BJ (cell line): ENCODE measurements at regions of chr10 and their contacts with region 1.

Region 1: DNA sequence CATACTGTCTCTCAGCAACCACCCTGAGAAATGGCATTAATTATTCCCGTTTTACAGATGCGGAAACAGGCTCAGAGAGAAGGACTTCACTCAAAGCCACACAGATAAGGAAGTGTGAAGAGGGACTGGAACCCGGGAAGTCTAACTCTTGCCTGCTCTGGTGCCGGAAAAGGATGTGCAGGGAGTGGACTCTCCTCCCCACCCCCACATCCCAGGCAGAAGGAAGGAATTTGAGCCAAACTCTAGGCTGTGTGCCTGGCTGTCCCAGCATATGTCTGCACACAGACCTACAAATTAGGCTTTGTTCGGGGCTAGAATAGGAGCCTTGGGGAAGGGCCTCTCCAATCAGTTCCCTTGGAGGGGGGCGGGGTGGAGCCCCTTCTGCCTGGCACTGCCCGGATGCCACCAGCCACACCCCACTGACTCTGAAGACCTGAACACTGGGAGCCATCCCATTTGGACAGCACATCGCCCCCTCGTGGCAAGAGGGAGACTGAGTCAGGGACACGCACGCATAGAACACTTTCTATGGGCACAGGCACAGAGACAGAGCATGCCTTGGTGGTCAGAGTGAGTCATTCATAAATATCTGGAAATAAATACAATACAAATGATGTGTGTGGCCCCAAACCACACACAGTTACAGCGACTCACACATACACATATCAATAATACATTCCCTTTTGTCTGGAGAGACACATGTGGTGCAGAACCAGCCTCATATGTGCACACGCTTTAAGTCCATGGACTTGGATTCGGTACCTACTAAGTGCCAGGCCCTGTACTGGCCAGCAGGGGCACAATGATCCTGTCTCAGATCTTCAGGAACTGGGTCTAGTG is 13.1 kb downstream of the LZTS2 start:
- DNase-seq: peak; percentile 72
- H3K4me3 ChIP-seq: no peak overlapping the region
- H3K27me3 ChIP-seq: no peaks in the 10 kb centered on the region
- CTCF ChIP-seq: peak; percentile 77

Region 2: GRCh38 chr10:100969187-100970075 is 43.3 kb before region 1 on chr10 and contains the start of gene SEMA4G:
- CTCF ChIA-PET with region 1: interaction called, 22 read pairs
- POLR2A ChIA-PET with region 1: no interaction called
- DNase-seq: no peak
- H3K4me3 ChIP-seq: peak within 1 kb of the TSS; percentile 67
- H3K27me3 ChIP-seq: no peaks in the 10 kb centered on the region
- CTCF ChIP-seq: peak; percentile 92
- polyA plus RNA-seq, gene SEMA4G: 4.2 and 4.3 TPM in 2 replicates

Region 3: DNA sequence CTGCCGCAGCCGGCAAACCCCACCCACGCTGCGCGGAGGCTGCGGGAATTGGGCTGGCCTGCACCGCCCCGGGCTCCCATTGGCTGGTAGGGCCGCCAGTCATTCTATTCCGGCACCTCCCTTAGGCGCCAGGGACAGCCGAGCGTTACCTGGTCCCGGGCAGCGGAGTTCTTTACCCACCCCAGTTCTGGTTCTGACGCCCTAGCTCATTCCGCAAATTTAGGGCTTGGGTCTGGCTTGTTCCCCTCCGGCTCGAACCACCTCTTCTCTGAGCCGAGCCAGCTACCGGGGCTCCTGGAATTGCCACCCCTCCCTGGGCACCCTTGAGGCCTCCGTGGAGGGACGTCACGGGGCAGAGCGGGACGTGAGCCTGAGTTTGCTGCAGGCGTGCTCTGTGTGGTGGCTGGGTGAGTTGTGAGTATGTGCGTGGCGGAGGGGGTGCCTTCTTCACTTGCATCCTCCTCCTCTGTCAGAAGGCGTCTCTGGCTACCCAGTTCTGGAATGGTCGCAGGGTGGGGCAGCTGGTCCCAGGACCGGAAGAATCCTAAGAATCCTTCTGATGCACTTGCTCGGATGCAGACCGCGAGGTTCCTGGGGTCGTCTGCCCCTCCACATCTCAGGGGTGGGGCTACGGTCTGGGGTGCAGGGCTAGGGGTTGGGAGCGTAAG is 18.5 kb after region 1 on chr10 and contains the starts of genes PDZD7 and SFXN3:
- CTCF ChIA-PET with region 1: interaction called, 194 read pairs
- POLR2A ChIA-PET with region 1: no interaction called
- DNase-seq: peak; percentile 41
- H3K4me3 ChIP-seq: peak within 1 kb of the TSS; percentile 76
- H3K27me3 ChIP-seq: 0 out of 2 replicates have a peak, but pooled peaks cover 2% of the 10 kb centered on the region
- CTCF ChIP-seq: no peak
- polyA plus RNA-seq, gene PDZD7: 0.53 and 0.86 TPM in 2 replicates
- polyA plus RNA-seq, gene SFXN3: 100 and 125 TPM in 2 replicates

Region 4: GRCh38 chr10:101050208-101051069 is 37.7 kb after region 1 on chr10:
- CTCF ChIA-PET with region 1: interaction called, 17 read pairs
- POLR2A ChIA-PET with region 1: no interaction called
- DNase-seq: no peak
- H3K4me3 ChIP-seq: peak overlapping the region; percentile 18
- H3K27me3 ChIP-seq: peaks cover 12% of the 10 kb centered on the region
- CTCF ChIP-seq: peak; percentile 88